ENCODE measurements at regions of chr3 and their contacts with region 1.

Region 1: GRCh38 chr3:187281191-187281714 is 10.3 kb downstream of the MASP1 start:
- DNase-seq: no peak
- H3K4me3 ChIP-seq: no peak overlapping the region
- H3K27ac ChIP-seq: no peak overlapping the region
- H3K4me1 ChIP-seq: peaks cover 0 to 4% (median 0%) of the 10 kb centered on the region in 4 experiments; a peak in 1 of 7 replicates
- H3K27me3 ChIP-seq: no peaks in the 10 kb centered on the region
- CTCF ChIP-seq: peak; percentile 16 to 59 (median 54); a peak in 3 of 4 replicates
- EP300 ChIP-seq: no peak
- POLR2A ChIP-seq: no peak
- RAD21 ChIP-seq: peak; percentile 9 to 25; a peak in 1 of 4 replicates

Region 2: DNA sequence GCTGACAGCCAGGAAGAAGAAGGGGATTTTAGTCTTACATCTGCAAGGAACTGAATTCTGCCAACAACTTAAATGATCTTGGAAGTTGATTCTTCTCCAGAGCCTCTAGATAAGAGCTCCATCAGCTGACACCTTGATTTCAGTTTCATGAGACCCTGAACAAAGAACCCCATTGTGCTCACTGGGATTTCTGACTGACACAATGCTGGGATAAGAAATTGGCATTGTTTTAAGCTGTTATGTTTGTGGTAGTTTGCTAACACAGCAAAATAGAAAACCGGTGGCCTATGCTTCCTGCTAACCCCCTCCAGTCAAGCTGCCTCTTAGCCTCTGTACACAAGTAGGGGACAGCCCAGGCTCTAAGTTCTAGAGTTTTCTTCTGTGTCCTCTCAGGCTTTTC is 25.9 kb before region 1 on chr3:
- CTCF ChIA-PET with region 1: interaction called, 49 read pairs
- POLR2A ChIA-PET with region 1: no interaction called
- DNase-seq: no peak
- H3K4me3 ChIP-seq: no peak overlapping the region
- H3K27ac ChIP-seq: no peak overlapping the region
- H3K4me1 ChIP-seq: peaks cover 0 to 3% (median 0%) of the 10 kb centered on the region in 4 experiments; a peak in 1 of 7 replicates
- H3K27me3 ChIP-seq: no peaks in the 10 kb centered on the region
- CTCF ChIP-seq: no peak
- EP300 ChIP-seq: no peak
- POLR2A ChIP-seq: no peak
- RAD21 ChIP-seq: no peak

Region 3: GRCh38 chr3:187264021-187264420 is 17.2 kb before region 1 on chr3:
- CTCF ChIA-PET with region 1: interaction called, 49 read pairs
- POLR2A ChIA-PET with region 1: interaction called, 5 read pairs
- DNase-seq: no peak
- H3K4me3 ChIP-seq: no peak overlapping the region
- H3K27ac ChIP-seq: no peak overlapping the region
- H3K4me1 ChIP-seq: no peaks in the 10 kb centered on the region
- H3K27me3 ChIP-seq: no peaks in the 10 kb centered on the region
- CTCF ChIP-seq: no peak
- EP300 ChIP-seq: no peak
- POLR2A ChIP-seq: no peak
- RAD21 ChIP-seq: no peak

Region 4: GRCh38 chr3:187361835-187362234 is 80.6 kb after region 1 on chr3:
- CTCF ChIA-PET with region 1: no interaction called
- POLR2A ChIA-PET with region 1: no interaction called
- DNase-seq: no peak
- H3K4me3 ChIP-seq: no peak overlapping the region; a peak in 1 of 8 replicates
- H3K27ac ChIP-seq: no peak overlapping the region
- H3K4me1 ChIP-seq: peaks cover 0 to 29% (median 20%) of the 10 kb centered on the region in 4 experiments; a peak in 5 of 7 replicates
- H3K27me3 ChIP-seq: no peaks in the 10 kb centered on the region; a peak in 1 of 7 replicates
- CTCF ChIP-seq: no peak
- EP300 ChIP-seq: no peak
- POLR2A ChIP-seq: no peak
- RAD21 ChIP-seq: no peak

Region 5: GRCh38 chr3:187841598-187841959 is 560.3 kb after region 1 on chr3:
- CTCF ChIA-PET with region 1: no interaction called
- POLR2A ChIA-PET with region 1: no interaction called
- DNase-seq: peak in 1 of 2 experiments; percentile 33
- H3K4me3 ChIP-seq: no peak overlapping the region
- H3K27ac ChIP-seq: no peak overlapping the region
- H3K4me1 ChIP-seq: no peaks in the 10 kb centered on the region
- H3K27me3 ChIP-seq: no peaks in the 10 kb centered on the region
- CTCF ChIP-seq: no peak
- EP300 ChIP-seq: no peak
- POLR2A ChIP-seq: no peak
- RAD21 ChIP-seq: no peak